CD8-positive, alpha-beta T cell (primary cell): ENCODE measurements at regions of chr17 and their contacts with region 1.

Region 1: DNA sequence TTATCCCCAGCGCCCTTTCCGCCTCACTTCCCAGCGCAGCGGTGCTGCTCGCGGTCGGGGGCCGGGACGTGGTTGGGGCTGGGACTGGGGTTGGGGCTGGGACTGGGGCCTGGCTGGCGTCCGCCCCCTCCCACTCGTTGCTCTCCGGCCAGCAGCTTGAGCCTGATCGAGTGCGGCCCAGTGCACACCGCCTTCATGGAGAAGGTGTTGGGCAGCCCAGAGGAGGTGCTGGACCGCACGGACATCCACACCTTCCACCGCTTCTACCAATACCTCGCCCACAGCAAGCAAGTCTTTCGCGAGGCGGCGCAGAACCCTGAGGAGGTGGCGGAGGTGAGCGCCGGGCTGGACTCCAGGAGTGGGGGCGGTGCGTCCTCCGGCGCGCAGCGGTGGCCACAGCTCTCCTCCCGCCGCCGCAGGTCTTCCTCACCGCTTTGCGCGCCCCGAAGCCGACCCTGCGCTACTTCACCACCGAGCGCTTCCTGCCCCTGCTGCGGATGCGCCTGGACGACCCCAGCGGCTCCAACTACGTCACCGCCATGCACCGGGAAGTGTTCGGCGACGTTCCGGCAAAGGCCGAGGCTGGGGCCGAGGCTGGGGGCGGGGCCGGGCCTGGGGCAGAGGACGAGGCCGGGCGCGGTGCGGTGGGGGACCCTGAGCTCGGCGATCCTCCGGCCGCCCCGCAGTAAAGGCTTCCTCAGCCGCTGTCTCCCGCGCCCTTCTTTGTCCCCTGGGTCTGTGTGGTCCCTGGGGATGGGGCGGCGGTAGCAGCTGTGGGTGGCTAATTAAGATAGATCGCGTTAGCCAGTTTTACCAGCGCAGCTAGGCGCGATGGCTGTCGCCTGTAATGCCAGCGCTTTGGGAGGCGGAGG is 1.8 kb downstream of the HSD17B1 start:
- DNase-seq: peak; percentile 38 to 91 (median 78)
- ATAC-seq: peak; percentile 88
- H3K4me3 ChIP-seq: peak overlapping the region; percentile 70 to 87
- H3K4me3 Mint-ChIP-seq: peak overlapping the region; percentile 89
- H3K27ac ChIP-seq: peak overlapping the region; percentile 74 to 80
- H3K27ac Mint-ChIP-seq: peak overlapping the region; percentile 94
- H3K4me1 ChIP-seq: peaks cover 12% of the 10 kb centered on the region
- H3K4me1 Mint-ChIP-seq: peaks cover 29% of the 10 kb centered on the region
- H3K27me3 ChIP-seq: no peaks in the 10 kb centered on the region
- H3K27me3 Mint-ChIP-seq: no peaks in the 10 kb centered on the region
- CTCF ChIP-seq: no peak

Region 2: DNA sequence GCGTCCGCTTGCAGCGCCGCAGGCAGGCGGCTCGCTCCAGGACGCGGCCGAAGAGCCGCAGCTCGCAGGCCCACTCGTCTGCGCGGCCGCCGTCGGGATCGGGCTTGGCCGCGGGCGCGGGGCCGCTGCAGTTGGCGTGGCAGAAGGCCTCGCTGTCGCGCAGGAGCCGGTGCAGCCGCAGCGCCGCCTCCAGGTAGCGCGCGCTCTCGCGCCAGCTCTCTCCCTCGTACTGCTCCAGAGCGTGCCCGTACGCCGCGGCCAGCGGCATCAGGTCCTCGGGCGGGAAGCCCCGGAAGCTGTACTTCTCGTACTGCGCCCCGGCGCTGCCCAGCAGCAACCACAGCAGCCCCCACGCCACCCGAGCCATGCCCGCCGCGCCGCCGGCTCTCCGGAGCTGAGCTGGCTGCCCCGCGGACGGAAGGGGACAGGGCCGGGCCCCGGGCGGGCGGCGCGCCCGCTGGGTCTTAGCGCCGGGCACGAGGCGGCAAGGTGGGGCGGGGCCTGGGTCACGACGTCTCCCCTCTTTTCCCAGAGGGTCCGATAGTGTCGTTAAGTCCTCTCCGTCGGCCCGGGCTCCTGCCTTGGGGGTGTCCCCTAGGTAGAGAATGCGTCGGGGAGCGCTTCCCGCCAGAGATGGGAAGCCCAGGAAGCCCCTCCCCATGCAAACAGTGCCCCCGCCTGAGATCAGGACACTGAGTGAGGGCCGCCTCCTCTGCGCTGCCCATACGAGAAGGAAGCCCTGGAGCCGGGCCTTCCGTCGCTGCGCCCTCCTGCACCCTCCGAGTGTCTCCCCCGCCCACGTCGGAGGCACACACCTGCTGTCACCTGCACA is 742.7 kb before region 1 on chr17 and contains the start of gene P3H4:
- CTCF ChIA-PET with region 1: no interaction called
- POLR2A ChIA-PET with region 1: no interaction called
- intact Hi-C with region 1: no loop called
- DNase-seq: peak; percentile 51 to 89 (median 75)
- ATAC-seq: peak; percentile 87
- H3K4me3 ChIP-seq: peak within 1 kb of the TSS; percentile 73 to 93
- H3K4me3 Mint-ChIP-seq: peak within 1 kb of the TSS; percentile 93
- H3K27ac ChIP-seq: peak within 1 kb of the TSS in 1 of 2 experiments; percentile 35
- H3K27ac Mint-ChIP-seq: peak within 1 kb of the TSS; percentile 55
- H3K4me1 ChIP-seq: peaks cover 26% of the 10 kb centered on the region
- H3K4me1 Mint-ChIP-seq: peaks cover 23% of the 10 kb centered on the region
- H3K27me3 ChIP-seq: no peaks in the 10 kb centered on the region
- H3K27me3 Mint-ChIP-seq: peaks cover 2% of the 10 kb centered on the region
- CTCF ChIP-seq: peak; percentile 51
- total RNA-seq, gene P3H4: 0.89 to 1.0 TPM

Region 3: DNA sequence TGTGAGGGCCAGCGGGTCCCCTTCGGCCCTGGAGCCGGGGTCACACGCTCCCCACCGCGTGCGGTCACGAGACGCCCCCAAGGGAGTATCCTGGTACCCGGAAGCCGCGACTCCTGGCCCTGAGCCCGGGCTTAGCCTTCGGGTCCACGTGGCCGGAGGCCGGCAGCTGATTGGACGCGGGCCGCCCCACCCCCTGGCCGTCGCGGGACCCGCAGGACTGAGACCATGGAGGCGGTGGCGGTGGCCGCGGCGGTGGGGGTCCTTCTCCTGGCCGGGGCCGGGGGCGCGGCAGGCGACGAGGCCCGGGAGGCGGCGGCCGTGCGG is 18.5 kb before region 1 on chr17 and contains the start of gene NAGLU:
- CTCF ChIA-PET with region 1: interaction called, 5 read pairs
- POLR2A ChIA-PET with region 1: interaction called, 11 read pairs
- intact Hi-C with region 1: loop called in 1 of 2 experiments (anchors 2 kb)
- DNase-seq: peak; percentile 47 to 89 (median 76)
- ATAC-seq: peak; percentile 69
- H3K4me3 ChIP-seq: peak within 1 kb of the TSS; percentile 56 to 82
- H3K4me3 Mint-ChIP-seq: peak within 1 kb of the TSS; percentile 87
- H3K27ac ChIP-seq: peak within 1 kb of the TSS; percentile 33 to 71
- H3K27ac Mint-ChIP-seq: peak within 1 kb of the TSS; percentile 87
- H3K4me1 ChIP-seq: peaks cover 38% of the 10 kb centered on the region
- H3K4me1 Mint-ChIP-seq: peaks cover 42% of the 10 kb centered on the region
- H3K27me3 ChIP-seq: no peaks in the 10 kb centered on the region
- H3K27me3 Mint-ChIP-seq: no peaks in the 10 kb centered on the region
- CTCF ChIP-seq: no peak
- total RNA-seq, gene NAGLU: 7.4 TPM

Region 4: GRCh38 chr17:42618442-42619150 is 64.1 kb after region 1 on chr17:
- CTCF ChIA-PET with region 1: no interaction called
- POLR2A ChIA-PET with region 1: no interaction called
- intact Hi-C with region 1: no loop called
- DNase-seq: peak in 1 of 9 experiments; percentile 17
- ATAC-seq: no peak
- H3K4me3 ChIP-seq: no peak overlapping the region
- H3K4me3 Mint-ChIP-seq: no peak overlapping the region
- H3K27ac ChIP-seq: no peak overlapping the region
- H3K27ac Mint-ChIP-seq: no peak overlapping the region
- H3K4me1 ChIP-seq: no peaks in the 10 kb centered on the region
- H3K4me1 Mint-ChIP-seq: no peaks in the 10 kb centered on the region
- H3K27me3 ChIP-seq: no peaks in the 10 kb centered on the region
- H3K27me3 Mint-ChIP-seq: no peaks in the 10 kb centered on the region
- CTCF ChIP-seq: no peak